Heart left ventricle (tissue), 16 donors: ENCODE measurements at regions of chr17 and their contacts with region 1.

Region 1: DNA sequence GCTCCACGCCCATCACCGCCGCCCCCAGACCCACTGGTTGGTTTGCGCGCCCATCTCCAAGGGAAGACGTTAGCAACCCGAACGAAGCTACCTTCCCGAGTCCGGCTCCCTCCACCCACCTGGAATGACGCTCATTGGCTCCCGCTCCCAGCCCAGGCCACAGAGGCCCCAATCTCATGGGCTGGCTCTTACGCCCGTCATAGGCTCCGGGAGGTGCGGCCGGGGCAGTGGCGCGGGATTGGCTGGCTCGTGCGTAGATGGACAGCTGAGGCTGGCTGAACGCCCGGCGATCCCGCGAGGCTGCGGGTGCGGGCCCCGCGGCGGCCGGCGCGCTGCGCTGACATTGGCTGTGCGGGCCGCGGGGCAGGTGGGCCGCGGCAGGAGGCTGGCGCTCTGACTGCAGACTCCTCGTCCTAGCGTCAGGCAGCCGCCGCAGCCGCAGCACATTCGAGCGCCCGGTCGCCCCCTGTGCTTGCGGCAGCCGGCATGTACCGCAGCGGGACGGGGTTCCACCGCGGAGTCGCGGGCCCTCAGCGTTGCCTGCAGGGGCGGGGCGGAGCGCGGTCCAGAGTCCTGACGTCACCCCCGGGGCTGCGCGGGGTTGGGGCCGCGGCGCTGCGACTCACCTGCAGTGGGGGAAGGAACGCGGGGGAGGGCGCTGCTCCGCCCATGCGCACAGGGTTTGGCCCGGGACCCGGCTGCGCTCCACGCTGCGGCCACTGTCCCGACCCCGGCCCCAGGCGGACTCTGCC is 453 bp upstream of the MYH10 start:
- DNase-seq: peak; percentile 98 to 99 (median 99)
- ATAC-seq: peak; percentile 97 to 99 (median 98)
- H3K4me3 ChIP-seq: peak overlapping the region; percentile 63 to 97 (median 86)
- H3K27ac ChIP-seq: peak overlapping the region; percentile 32 to 94 (median 86)
- H3K4me1 ChIP-seq: peaks cover 0 to 36% (median 13%) of the 10 kb centered on the region in 12 donors
- H3K27me3 ChIP-seq: peaks cover 0 to 37% (median 0%) of the 10 kb centered on the region in 9 donors
- CTCF ChIP-seq: peak in 7 of 12 donors; percentile 11 to 32 (median 23)
- POLR2A ChIP-seq: peak in 1 of 2 donors; percentile 47

Region 2: GRCh38 chr17:8581002-8581658 is 49.8 kb before region 1 on chr17:
- intact Hi-C with region 1: loop called in 1 of 10 experiments (anchors 5 kb)
- DNase-seq: no peak
- ATAC-seq: no peak
- H3K4me3 ChIP-seq: no peak overlapping the region
- H3K27ac ChIP-seq: no peak overlapping the region
- H3K4me1 ChIP-seq: peaks cover 0 to 16% (median 0%) of the 10 kb centered on the region in 12 donors
- H3K27me3 ChIP-seq: no peaks in the 10 kb centered on the region
- CTCF ChIP-seq: no peak
- POLR2A ChIP-seq: no peak

Region 3: GRCh38 chr17:8611619-8612298 is 19.2 kb before region 1 on chr17:
- intact Hi-C with region 1: loop called in 2 of 10 experiments (anchors 2 kb)
- DNase-seq: no peak
- ATAC-seq: peak in 2 of 4 donors; percentile 39 to 60
- H3K4me3 ChIP-seq: peak overlapping the region in 10 of 12 donors; percentile 1 to 32 (median 22)
- H3K27ac ChIP-seq: peak overlapping the region in 11 of 12 donors; percentile 3 to 75 (median 56)
- H3K4me1 ChIP-seq: peaks cover 3 to 52% (median 27%) of the 10 kb centered on the region in 12 donors
- H3K27me3 ChIP-seq: no peaks in the 10 kb centered on the region
- CTCF ChIP-seq: no peak
- POLR2A ChIP-seq: no peak

Region 4: GRCh38 chr17:8745586-8746500 is 114.9 kb after region 1 on chr17:
- intact Hi-C with region 1: loop called in 3 of 10 experiments (anchors 5 to 10 kb)
- DNase-seq: peak; percentile 69 to 90 (median 73)
- ATAC-seq: peak; percentile 67 to 95 (median 92)
- H3K4me3 ChIP-seq: peak overlapping the region; percentile 50 to 82 (median 64)
- H3K27ac ChIP-seq: peak overlapping the region in 8 of 12 donors; percentile 0 to 68 (median 48)
- H3K4me1 ChIP-seq: peaks cover 0 to 15% (median 4%) of the 10 kb centered on the region in 12 donors
- H3K27me3 ChIP-seq: no peaks in the 10 kb centered on the region
- CTCF ChIP-seq: peak; percentile 84 to 98 (median 96)
- POLR2A ChIP-seq: no peak